GM23248 (cell line): ENCODE measurements at regions of chr6 and their contacts with region 1.

Region 1: DNA sequence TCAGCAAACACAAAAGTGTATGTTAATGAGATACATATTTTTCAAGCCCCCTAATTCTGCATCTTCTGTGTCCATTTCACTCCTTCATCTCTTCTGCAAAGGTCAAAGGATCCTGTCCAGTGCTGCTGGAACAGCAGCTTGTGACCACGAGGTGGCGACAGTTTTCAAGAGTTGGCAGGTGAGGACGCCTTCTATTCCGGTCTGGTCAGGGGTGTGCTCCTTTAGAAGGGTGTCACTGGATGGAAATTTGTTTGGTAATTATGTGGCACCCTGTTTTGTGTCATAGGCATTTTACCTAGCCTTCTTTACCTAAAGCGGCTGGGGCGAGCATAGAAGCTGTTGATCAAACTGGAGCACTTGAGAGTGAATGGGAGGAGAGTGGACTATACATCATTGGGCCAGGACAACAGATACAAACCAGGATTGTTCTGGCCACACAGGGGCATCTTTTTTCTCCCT is 32.9 kb upstream of the ERVFRD-1 start:
- DNase-seq: peak; percentile 80
- H3K4me3 ChIP-seq: no peak overlapping the region
- H3K27ac ChIP-seq: peak overlapping the region; percentile 67
- H3K4me1 ChIP-seq: peaks cover 18% of the 10 kb centered on the region
- H3K27me3 ChIP-seq: no peaks in the 10 kb centered on the region

Region 2: DNA sequence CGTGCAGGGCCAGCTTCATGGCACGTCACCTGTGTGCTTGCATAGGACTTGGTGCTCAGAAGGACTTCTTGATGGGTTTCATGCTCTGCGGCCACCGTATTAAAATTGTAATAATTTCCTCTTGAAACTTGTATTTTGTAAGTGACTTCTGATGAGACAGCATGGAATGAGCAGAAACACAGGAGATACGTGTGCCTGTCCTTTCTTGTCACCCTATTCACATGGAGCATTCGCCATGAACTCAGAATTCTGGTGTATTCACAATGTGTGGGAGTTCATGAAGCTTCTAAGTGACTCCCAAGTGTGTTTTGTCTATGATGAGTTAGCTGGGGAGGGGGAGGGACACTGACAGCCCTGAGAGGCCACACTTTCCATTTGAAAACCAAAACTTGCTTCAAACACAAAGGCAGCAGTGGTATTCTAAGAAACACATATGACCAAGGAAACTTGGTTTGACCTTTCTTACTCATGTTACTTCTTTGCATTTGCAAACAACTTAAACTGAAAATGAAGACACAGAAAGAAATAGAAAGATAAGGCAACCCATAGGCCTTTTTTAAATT is 180.1 kb after region 1 on chr6:
- in situ Hi-C with region 1: no loop called
- DNase-seq: no peak
- H3K4me3 ChIP-seq: no peak overlapping the region
- H3K27ac ChIP-seq: no peak overlapping the region
- H3K4me1 ChIP-seq: peaks cover 15% of the 10 kb centered on the region
- H3K27me3 ChIP-seq: no peaks in the 10 kb centered on the region

Region 3: GRCh38 chr6:11496152-11497060 is 352.0 kb after region 1 on chr6:
- in situ Hi-C with region 1: loop called (anchors 10 kb)
- DNase-seq: peak; percentile 86
- H3K4me3 ChIP-seq: no peak overlapping the region
- H3K27ac ChIP-seq: no peak overlapping the region
- H3K4me1 ChIP-seq: peaks cover 10% of the 10 kb centered on the region
- H3K27me3 ChIP-seq: no peaks in the 10 kb centered on the region